HCT116 (cell line): ENCODE measurements at regions of chr6 and their contacts with region 1.

Region 1: DNA sequence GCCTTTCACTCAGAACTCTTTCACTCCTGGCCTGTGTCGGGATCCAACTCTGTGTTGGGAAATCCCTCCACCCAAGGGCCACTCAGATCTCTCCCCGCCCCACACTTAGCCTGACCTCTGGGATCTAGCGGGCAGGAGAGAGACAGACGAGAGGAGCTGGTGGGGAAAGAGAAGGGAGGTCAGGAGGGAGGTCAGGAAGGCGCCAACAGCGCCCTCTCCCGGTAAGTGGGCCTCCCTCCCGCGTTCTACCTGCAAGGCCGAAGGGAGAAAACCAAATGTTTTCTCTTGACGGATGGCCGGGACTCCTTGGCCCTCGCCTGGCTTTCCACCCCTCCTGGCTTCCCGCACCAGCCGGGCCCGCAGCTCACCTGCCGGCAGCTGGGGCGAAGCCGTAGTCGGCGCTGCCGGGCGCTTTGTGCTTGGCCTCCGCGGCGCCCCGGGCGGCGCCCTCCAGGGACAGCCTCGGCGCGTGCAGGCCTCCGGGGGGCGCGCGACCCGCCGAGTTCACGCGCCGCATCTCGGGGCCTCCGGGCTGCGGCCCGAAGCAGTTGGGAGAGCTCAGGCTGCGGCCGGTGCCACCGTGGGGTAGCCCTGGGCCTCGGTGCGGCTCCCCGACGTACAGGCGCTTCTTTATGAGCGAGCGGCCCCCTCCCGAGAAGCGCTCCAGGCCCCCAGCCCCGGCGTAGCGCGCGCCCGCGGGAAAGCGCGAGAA is 38.2 kb downstream of the C6orf132 start:
- DNase-seq: no peak
- ATAC-seq: no peak
- H3K4me3 ChIP-seq: no peak overlapping the region
- H3K27ac ChIP-seq: no peak overlapping the region
- H3K4me1 ChIP-seq: peaks cover 25 to 40% of the 10 kb centered on the region in 2 experiments
- H3K27me3 ChIP-seq: no peaks in the 10 kb centered on the region
- CTCF ChIP-seq: peak in 2 of 3 experiments; percentile 19 to 25; a peak in 1 of 6 replicates
- POLR2A ChIP-seq: no peak
- RAD21 ChIP-seq: no peak

Region 2: DNA sequence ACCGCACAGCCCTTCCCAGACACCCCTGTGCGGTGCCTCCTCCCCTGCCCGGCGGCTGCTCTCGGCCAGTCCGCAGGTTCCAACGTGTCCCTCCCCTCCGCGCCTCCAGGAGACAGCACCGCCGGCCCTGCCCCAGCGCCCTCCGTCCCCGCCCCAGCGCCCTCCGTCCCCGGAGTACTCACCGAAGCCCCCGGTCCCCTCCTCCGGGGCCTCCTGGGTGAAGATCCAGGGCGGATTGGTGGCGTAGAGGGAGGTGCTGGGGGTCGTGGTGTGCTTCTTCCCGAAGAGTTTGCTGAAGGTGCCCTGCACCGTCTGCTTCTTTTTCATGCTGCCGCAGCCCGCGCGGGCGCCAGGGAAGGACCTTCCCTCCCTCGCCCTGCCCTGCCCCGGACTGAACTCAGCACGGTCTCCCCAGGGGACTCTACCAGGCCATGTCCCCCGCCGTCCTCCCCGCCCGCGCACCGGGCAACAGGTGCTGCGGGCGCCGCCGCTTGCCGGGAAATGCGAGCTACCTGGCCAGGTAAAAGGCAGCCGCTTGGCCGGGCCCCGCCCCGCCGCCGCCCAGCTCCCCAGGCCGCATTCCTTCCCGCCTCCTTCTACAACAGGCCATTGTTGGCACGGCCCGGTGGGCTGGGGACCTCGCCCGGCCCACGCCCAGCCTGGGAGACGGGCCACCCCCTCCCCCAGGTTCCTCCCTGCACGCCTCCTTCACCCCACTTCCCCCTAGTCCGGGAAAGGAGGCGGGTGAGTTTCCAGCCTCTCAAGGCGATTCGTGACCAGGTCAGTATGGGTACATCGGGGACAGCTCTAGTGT is 38.1 kb after region 1 on chr6 and contains the start of gene C6orf132:
- CTCF ChIA-PET with region 1: interaction called, 3 read pairs
- POLR2A ChIA-PET with region 1: interaction called, 4 read pairs
- RAD21 ChIA-PET with region 1: interaction called in 1 of 2 experiments, 4 read pairs
- intact Hi-C with region 1: loop called (anchors 5 kb)
- DNase-seq: no peak
- ATAC-seq: peak; percentile 77
- H3K4me3 ChIP-seq: peak within 1 kb of the TSS; percentile 76 to 88
- H3K27ac ChIP-seq: peak within 1 kb of the TSS; percentile 77
- H3K4me1 ChIP-seq: peaks cover 52 to 58% of the 10 kb centered on the region in 2 experiments
- H3K27me3 ChIP-seq: no peaks in the 10 kb centered on the region
- CTCF ChIP-seq: no peak
- POLR2A ChIP-seq: no peak
- RAD21 ChIP-seq: no peak
- total RNA-seq, gene C6orf132: 18.9 TPM